Dorsolateral prefrontal cortex (tissue), 120 donors: ENCODE measurements at regions of chrX and their contacts with region 1.

Region 1: GRCh38 chrX:49191033-49191871 is 5.1 kb upstream of the PRICKLE3 start:
- DNase-seq: peak; percentile 64 to 96 (median 92)
- H3K4me3 ChIP-seq: peak overlapping the region; percentile 30 to 76 (median 62)
- H3K27ac ChIP-seq: peak overlapping the region in 55 of 59 donors; percentile 7 to 90 (median 82)
- H3K27me3 ChIP-seq: peaks cover 0 to 43% (median 0%) of the 10 kb centered on the region in 45 donors
- CTCF ChIP-seq: peak in 4 of 56 donors; percentile 7 to 36 (median 19)

Region 2: DNA sequence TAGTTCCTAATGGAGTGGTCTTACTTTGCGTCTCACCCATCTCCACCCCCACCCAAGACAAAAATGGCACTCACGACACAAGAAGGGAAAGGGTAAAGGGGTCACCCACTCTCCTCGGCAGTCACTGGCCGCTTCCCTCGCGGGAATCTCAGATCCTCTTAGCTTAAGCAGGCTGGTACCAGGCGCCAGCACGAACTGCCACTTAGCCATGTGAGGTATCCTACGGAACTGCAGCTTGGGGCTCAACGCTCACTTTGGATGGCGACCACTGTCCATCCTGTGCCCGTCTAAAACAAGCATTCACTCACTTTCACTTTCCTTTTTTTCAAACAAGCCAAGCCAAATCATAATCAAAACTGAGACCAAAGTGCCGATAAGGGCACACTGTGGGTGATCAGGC is 43.3 kb before region 1 on chrX:
- intact Hi-C with region 1: no loop called
- DNase-seq: no peak
- H3K4me3 ChIP-seq: no peak overlapping the region
- H3K27ac ChIP-seq: no peak overlapping the region
- H3K27me3 ChIP-seq: peaks cover 0 to 52% (median 2%) of the 10 kb centered on the region in 45 donors
- CTCF ChIP-seq: no peak

Region 3: GRCh38 chrX:49171752-49172279 is 19.4 kb before region 1 on chrX and contains the start of gene PLP2:
- intact Hi-C with region 1: loop called in 1 of 2 experiments (anchors 2 kb)
- DNase-seq: peak in 1 of 10 donors; percentile 28
- H3K4me3 ChIP-seq: peak within 1 kb of the TSS; percentile 14 to 71 (median 52)
- H3K27ac ChIP-seq: peak within 1 kb of the TSS in 28 of 59 donors; percentile 0 to 74 (median 43)
- H3K27me3 ChIP-seq: peaks cover 0 to 61% (median 4%) of the 10 kb centered on the region in 45 donors
- CTCF ChIP-seq: no peak
- total RNA-seq, gene PLP2: 2.2 to 24.2 (median 6.7) TPM

Region 4: DNA sequence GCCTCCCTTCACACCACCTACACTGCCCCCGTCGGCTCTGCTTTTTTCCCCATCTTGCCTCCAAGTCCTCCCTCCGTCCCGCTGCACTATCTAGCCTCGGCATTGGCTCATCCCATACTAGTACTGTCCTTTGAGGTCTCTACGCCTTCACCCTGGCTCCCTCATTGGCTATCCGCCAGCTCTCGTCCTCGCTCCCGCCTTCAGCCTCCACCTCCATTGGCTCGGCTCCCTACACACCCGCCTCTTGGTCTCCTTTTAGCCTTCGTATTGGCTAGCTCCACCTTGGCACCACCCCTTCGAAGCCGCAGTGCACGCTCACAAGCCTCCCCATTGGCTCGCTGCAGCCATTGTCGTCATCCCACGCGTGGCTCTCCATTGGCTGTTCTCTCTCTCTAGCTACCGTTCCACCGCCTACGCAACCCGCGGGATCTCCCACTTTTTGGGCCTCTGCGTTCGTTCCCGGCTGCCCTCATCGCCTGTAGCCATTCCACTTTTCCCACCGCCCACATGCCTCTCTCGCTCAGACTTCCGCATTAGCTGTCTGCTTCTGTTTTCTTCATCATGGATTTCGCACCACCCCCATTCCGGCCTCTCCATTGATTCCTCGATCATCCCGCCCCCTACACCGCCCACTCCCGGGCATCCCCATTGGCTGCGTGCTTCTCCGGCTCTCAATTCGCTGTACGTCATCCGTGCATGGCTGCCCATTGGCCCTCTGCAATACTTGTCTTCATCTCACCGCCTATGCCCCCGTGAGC is 77.9 kb after region 1 on chrX:
- intact Hi-C with region 1: loop called in 1 of 2 experiments (anchors 1 kb)
- DNase-seq: peak; percentile 90 to 98 (median 97)
- H3K4me3 ChIP-seq: peak overlapping the region; percentile 44 to 83 (median 69)
- H3K27ac ChIP-seq: peak overlapping the region; percentile 67 to 98 (median 94)
- H3K27me3 ChIP-seq: peaks cover 0 to 28% (median 0%) of the 10 kb centered on the region in 45 donors
- CTCF ChIP-seq: no peak